BJ (cell line): ENCODE measurements at regions of chr3 and their contacts with region 1.

Region 1: GRCh38 chr3:99789011-99789721 is 28.5 kb upstream of the CMSS1 start:
- DNase-seq: no peak
- H3K4me3 ChIP-seq: no peak overlapping the region
- H3K27me3 ChIP-seq: no peaks in the 10 kb centered on the region
- CTCF ChIP-seq: peak; percentile 83

Region 2: DNA sequence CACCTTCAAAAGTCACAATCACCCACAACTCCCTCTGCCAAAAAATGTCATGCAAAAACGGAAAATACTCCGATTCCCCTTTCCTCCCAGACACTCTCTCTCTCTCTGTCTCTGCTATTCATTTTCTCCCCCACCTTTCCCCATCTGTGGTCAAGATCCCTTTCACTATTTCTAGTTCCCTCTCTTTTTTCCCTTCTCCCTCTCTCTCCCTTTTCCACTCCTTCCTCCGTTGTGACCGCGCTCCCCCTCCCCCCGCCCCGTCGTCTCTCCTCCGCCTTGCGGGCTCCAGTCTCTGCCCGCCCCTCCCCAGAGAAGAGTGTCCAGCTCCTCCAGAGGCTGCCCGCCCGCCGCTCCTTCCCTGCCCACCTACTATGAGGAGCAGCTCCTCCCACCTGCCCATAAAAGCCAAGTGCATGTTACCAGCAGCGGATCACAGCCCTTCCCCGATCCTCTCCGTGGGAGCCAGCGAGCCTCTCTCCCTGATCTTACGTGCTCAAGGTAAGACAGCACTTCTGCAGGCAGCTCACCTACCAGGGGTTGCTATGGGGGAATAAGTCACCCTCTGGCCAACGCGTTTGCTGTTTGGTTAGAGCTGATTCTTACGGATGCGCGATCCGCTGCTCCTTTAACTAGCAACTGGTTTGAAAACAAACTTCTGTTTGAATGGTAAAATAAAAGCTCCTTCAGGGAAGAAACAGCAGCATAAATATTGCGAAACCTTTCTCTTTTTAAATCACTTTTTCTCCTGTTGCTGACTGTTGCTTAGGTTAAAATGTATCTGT is 150.8 kb before region 1 on chr3 and contains the start of gene COL8A1:
- CTCF ChIA-PET with region 1: interaction called, 3 read pairs
- POLR2A ChIA-PET with region 1: interaction called, 10 read pairs
- DNase-seq: no peak
- H3K4me3 ChIP-seq: peak within 1 kb of the TSS; percentile 57
- H3K27me3 ChIP-seq: no peaks in the 10 kb centered on the region
- CTCF ChIP-seq: no peak
- polyA plus RNA-seq, gene COL8A1: 186 and 213 TPM in 2 replicates

Region 3: DNA sequence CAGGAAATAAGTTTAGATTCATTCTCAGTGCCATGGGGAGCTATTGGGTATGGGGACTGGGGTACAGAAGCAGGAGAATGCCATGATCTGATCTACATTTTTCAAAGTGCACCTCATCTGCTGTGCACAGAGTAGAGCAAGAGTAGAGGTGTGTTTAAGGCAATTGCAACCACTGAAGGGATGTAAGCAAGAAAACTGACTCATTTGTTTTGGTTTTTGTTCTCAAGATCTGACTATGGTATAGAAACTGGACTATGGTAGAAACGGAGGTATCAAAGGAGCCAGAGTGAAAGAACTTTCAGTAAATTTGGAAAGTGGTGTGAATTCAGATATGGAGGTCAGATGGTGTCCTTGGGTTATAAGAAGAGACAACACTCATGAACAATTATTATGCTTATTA is 57.7 kb before region 1 on chr3:
- CTCF ChIA-PET with region 1: no interaction called
- POLR2A ChIA-PET with region 1: no interaction called
- DNase-seq: no peak
- H3K4me3 ChIP-seq: no peak overlapping the region
- H3K27me3 ChIP-seq: no peaks in the 10 kb centered on the region
- CTCF ChIP-seq: no peak

Region 4: GRCh38 chr3:99808151-99808794 is 19.1 kb after region 1 on chr3:
- CTCF ChIA-PET with region 1: interaction called, 13 read pairs
- POLR2A ChIA-PET with region 1: interaction called, 3 read pairs
- DNase-seq: no peak
- H3K4me3 ChIP-seq: no peak overlapping the region
- H3K27me3 ChIP-seq: peaks cover 2% of the 10 kb centered on the region; the same call in 1 of the 2 replicates
- CTCF ChIP-seq: peak; percentile 94